ENCODE measurements at regions of chr4 and their contacts with region 1.

Region 1: DNA sequence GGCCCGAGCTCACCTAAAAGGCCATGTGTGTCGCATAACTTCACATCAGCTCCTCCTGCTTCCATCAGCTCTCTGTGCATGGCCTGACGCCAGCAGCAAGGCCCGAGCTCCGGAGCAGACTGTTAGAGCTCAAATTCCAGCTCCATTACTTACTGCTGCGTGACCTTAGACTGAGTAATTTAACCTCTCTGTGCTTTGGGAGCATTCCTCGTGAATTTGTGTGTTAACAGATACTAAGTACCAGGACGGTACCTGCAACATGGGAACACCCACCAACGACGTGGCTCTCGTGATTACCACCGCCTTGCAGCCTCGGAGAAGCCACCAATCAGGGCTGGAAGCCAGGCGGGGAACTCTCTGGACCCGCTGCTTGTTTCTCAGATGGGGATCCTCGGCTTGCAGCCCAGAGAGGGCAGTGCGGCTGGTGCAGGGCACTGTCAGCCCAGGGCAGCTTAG is 12.9 kb downstream of the LETM1 start:
- DNase-seq: no peak
- H3K4me3 ChIP-seq: no peak overlapping the region
- H3K27ac ChIP-seq: no peak overlapping the region
- H3K4me1 ChIP-seq: peaks cover 6% of the 10 kb centered on the region
- CTCF ChIP-seq: no peak

Region 2: GRCh38 chr4:1300466-1301455 is 542.3 kb before region 1 on chr4:
- CTCF ChIA-PET with region 1: no interaction called
- POLR2A ChIA-PET with region 1: no interaction called
- intact Hi-C with region 1: no loop called
- DNase-seq: no peak
- H3K4me3 ChIP-seq: no peak overlapping the region
- H3K27ac ChIP-seq: no peak overlapping the region
- H3K4me1 ChIP-seq: peaks cover 6% of the 10 kb centered on the region
- CTCF ChIP-seq: no peak

Region 3: GRCh38 chr4:1792832-1793495 is 50.1 kb before region 1 on chr4 and contains the start of gene FGFR3:
- CTCF ChIA-PET with region 1: no interaction called
- POLR2A ChIA-PET with region 1: no interaction called
- intact Hi-C with region 1: no loop called
- DNase-seq: no peak
- H3K4me3 ChIP-seq: no peak within 1 kb of the TSS
- H3K27ac ChIP-seq: no peak within 1 kb of the TSS
- H3K4me1 ChIP-seq: no peaks in the 10 kb centered on the region
- CTCF ChIP-seq: no peak
- total RNA-seq, gene FGFR3: not detected in 2 replicates

Region 4: GRCh38 chr4:1883583-1883982 is 40.6 kb after region 1 on chr4:
- CTCF ChIA-PET with region 1: no interaction called
- POLR2A ChIA-PET with region 1: interaction called, 12 read pairs
- intact Hi-C with region 1: no loop called
- DNase-seq: no peak
- H3K4me3 ChIP-seq: no peak overlapping the region
- H3K27ac ChIP-seq: no peak overlapping the region
- H3K4me1 ChIP-seq: peaks cover 7% of the 10 kb centered on the region
- CTCF ChIP-seq: no peak

Measured in OCI-LY7 (cell line).